Esophagus muscularis mucosa (tissue), 4 donors: ENCODE measurements at regions of chr12 and their contacts with region 1.

Region 1: DNA sequence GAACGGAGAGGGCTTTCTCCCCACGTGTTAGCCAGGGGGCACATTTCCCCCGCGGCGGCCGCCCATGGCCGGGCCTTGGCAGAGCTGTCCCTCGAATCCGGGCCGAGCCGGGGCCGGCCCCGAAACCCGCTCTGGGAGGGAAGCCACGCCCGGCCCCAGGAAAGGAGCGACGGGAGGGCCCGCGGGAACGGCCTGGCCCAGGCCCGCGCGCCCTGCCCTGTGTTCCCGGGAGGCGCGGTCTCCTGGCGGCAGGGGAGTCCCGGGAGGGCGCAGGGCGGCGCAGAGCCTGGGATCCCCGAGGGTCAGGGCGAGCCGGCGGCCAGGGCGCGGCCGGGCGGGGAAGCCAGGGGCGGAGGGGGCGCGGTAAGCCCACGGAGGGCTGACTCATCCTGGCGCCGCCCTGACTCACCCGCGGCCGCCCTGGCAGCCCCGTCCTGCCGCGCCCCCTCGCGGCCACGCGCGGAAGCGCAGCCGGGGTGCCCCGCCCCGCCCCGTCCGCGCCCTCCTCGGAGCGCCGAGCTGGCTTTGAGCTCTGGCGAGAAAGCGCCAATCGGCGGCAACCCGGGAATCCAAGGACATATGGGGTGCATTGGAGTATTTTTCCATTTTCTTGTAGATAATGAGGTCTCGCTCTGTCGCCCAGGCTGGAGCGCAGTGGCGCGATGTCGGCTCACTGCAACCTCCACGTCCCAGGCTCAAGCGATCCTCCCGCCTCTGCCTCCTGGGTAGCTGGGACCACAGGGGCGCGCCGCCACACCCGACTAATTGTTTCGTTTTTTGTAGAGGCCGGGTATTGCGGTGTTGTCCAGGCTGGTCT is 31.8 kb upstream of the PLEKHG6 start:
- DNase-seq: no peak
- H3K4me3 ChIP-seq: peak overlapping the region; percentile 57 to 62 (median 61)
- H3K27ac ChIP-seq: peak overlapping the region; percentile 88 to 95 (median 94)
- H3K4me1 ChIP-seq: peaks cover 45 to 56% (median 49%) of the 10 kb centered on the region in 4 donors
- H3K27me3 ChIP-seq: no peaks in the 10 kb centered on the region
- CTCF ChIP-seq: peak; percentile 99 to 100 (median 99)
- EP300 ChIP-seq: no peak
- POLR2A ChIP-seq: no peak

Region 2: GRCh38 chr12:6145564-6145963 is 133.1 kb before region 1 on chr12:
- intact Hi-C with region 1: no loop called
- DNase-seq: no peak
- H3K4me3 ChIP-seq: no peak overlapping the region
- H3K27ac ChIP-seq: no peak overlapping the region
- H3K4me1 ChIP-seq: peaks cover 8 to 15% (median 9%) of the 10 kb centered on the region in 4 donors
- H3K27me3 ChIP-seq: no peaks in the 10 kb centered on the region
- CTCF ChIP-seq: no peak
- EP300 ChIP-seq: no peak
- POLR2A ChIP-seq: no peak

Region 3: DNA sequence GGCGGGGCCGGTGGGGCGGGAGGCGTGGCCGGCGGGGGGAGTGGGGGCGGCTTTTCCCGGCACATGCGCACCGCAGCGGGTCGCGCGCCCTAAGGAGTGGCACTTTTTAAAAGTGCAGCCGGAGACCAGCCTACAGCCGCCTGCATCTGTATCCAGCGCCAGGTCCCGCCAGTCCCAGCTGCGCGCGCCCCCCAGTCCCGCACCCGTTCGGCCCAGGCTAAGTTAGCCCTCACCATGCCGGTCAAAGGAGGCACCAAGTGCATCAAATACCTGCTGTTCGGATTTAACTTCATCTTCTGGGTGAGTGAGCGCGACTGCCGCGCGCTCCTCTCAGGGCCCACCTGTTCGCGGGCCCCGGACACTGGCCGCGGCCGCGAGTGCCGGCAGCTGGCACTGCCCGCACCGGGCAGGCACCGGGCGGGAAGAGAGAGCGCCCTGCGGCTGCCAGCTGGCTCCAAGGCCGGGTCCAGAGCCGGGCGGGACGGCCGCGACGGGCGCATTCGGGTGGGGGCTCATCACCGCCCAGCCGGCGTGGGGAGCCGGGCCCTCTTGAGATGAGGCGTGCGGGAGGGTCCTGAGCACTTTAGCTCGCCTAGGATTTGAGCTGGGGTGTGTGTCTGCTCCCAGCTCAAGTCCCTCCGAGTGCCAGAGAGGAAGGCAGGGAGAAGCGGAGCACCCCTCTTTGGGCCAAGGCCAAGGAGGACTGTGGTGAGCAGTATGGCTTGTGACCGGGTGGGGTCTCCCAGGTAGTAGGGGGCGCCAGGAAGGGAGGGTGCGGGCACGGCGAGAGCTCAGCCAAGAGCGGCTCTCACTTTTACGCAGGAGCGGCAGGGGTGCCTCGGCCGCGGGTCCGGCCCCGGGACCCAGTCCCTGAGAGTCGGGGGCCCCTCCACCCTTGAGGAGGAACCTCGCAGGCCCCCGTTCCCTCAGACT is 78.1 kb before region 1 on chr12 and contains the start of gene CD9:
- intact Hi-C with region 1: loop called (anchors 1 kb)
- DNase-seq: no peak
- H3K4me3 ChIP-seq: peak within 1 kb of the TSS; percentile 78 to 100 (median 98)
- H3K27ac ChIP-seq: peak within 1 kb of the TSS; percentile 94 to 100 (median 98)
- H3K4me1 ChIP-seq: peaks cover 50 to 83% (median 80%) of the 10 kb centered on the region in 4 donors
- H3K27me3 ChIP-seq: no peaks in the 10 kb centered on the region
- CTCF ChIP-seq: no peak
- EP300 ChIP-seq: no peak
- POLR2A ChIP-seq: peak; percentile 47
- total RNA-seq, gene CD9: 349 to 416 (median 399) TPM

Region 4: DNA sequence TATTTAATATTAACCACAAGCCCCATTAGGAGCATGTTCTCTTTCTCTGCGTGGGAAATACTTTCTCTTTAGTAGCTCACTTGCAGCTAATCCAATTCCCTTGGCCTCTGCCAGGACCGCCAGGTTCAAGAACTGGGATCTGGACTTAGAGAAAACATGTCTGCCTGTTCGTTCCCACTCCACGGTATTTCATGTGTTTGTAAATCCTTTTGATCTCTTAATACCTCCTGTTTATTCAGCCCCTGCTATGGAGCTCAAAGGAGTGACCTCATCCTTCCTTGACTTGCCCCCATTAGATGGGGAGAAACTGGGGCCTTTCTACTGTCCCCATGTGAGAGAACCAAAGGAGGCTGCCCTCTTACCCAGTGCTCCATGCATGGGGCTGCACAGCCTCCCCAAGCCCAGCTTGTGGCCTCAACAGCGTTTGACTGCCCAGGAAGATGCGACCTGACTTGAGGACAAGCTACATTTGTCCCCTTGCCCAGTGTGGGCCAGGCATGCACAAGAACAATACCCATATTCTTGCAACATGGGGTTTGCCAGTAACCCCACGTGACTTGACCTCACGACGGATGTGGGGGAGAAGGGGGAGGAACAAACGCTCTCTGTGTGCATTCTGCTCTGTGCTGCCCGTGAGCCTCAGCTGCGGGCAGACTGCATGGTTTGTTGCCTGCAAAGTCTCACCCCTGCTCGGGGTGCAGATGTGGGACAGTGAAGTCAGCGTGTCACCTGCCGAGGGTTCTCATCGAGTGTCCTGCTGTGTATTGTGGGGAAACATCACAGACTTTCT is 48.1 kb before region 1 on chr12:
- intact Hi-C with region 1: loop called (anchors 2 kb)
- DNase-seq: no peak
- H3K4me3 ChIP-seq: peak overlapping the region; percentile 26 to 43 (median 27)
- H3K27ac ChIP-seq: peak overlapping the region; percentile 94 to 100 (median 98)
- H3K4me1 ChIP-seq: peaks cover 93 to 100% (median 100%) of the 10 kb centered on the region in 4 donors
- H3K27me3 ChIP-seq: no peaks in the 10 kb centered on the region
- CTCF ChIP-seq: no peak
- EP300 ChIP-seq: peak; percentile 61
- POLR2A ChIP-seq: no peak

Region 5: GRCh38 chr12:6341417-6342139 is 62.9 kb after region 1 on chr12 and contains the start of gene TNFRSF1A:
- intact Hi-C with region 1: no loop called
- DNase-seq: no peak
- H3K4me3 ChIP-seq: peak within 1 kb of the TSS; percentile 61 to 92 (median 84)
- H3K27ac ChIP-seq: peak within 1 kb of the TSS; percentile 93 to 99 (median 97)
- H3K4me1 ChIP-seq: peaks cover 67 to 84% (median 77%) of the 10 kb centered on the region in 4 donors
- H3K27me3 ChIP-seq: no peaks in the 10 kb centered on the region
- CTCF ChIP-seq: no peak
- EP300 ChIP-seq: no peak
- POLR2A ChIP-seq: peak; percentile 32
- total RNA-seq, gene TNFRSF1A: 146 to 464 (median 247) TPM